Mammary epithelial cell (primary cell): ENCODE measurements at regions of chr2 and their contacts with region 1.

Region 1: GRCh38 chr2:64318476-64318748 is 135.6 kb upstream of the LGALSL start:
- DNase-seq: no peak
- H3K4me3 ChIP-seq: no peak overlapping the region
- H3K27ac ChIP-seq: no peak overlapping the region
- H3K4me1 ChIP-seq: no peaks in the 10 kb centered on the region
- H3K27me3 ChIP-seq: no peaks in the 10 kb centered on the region
- CTCF ChIP-seq: no peak

Region 2: GRCh38 chr2:64045938-64046337 is 272.5 kb before region 1 on chr2:
- CTCF ChIA-PET with region 1: no interaction called
- dilution Hi-C with region 1: no loop called
- in situ Hi-C with region 1: loop called (anchors 5 to 10 kb)
- intact Hi-C with region 1: no loop called
- DNase-seq: no peak
- H3K4me3 ChIP-seq: no peak overlapping the region
- H3K27ac ChIP-seq: no peak overlapping the region
- H3K4me1 ChIP-seq: peaks cover 4% of the 10 kb centered on the region
- H3K27me3 ChIP-seq: no peaks in the 10 kb centered on the region
- CTCF ChIP-seq: no peak